Colonic mucosa (tissue), 4 donors: ENCODE measurements at regions of chr14 and their contacts with region 1.

Region 1: GRCh38 chr14:65588426-65589140 is 176.1 kb downstream of the FUT8 start:
- DNase-seq: no peak
- H3K4me3 ChIP-seq: no peak overlapping the region
- H3K27ac ChIP-seq: no peak overlapping the region
- H3K4me1 ChIP-seq: no peaks in the 10 kb centered on the region
- H3K27me3 ChIP-seq: no peaks in the 10 kb centered on the region
- CTCF ChIP-seq: no peak

Region 2: GRCh38 chr14:65496178-65496993 is 92.2 kb before region 1 on chr14:
- intact Hi-C with region 1: loop called (anchors 10 kb)
- DNase-seq: no peak
- H3K4me3 ChIP-seq: no peak overlapping the region
- H3K27ac ChIP-seq: no peak overlapping the region
- H3K4me1 ChIP-seq: no peaks in the 10 kb centered on the region
- H3K27me3 ChIP-seq: no peaks in the 10 kb centered on the region
- CTCF ChIP-seq: no peak